ENCODE measurements at regions of chr7 and their contacts with region 1.

Region 1: DNA sequence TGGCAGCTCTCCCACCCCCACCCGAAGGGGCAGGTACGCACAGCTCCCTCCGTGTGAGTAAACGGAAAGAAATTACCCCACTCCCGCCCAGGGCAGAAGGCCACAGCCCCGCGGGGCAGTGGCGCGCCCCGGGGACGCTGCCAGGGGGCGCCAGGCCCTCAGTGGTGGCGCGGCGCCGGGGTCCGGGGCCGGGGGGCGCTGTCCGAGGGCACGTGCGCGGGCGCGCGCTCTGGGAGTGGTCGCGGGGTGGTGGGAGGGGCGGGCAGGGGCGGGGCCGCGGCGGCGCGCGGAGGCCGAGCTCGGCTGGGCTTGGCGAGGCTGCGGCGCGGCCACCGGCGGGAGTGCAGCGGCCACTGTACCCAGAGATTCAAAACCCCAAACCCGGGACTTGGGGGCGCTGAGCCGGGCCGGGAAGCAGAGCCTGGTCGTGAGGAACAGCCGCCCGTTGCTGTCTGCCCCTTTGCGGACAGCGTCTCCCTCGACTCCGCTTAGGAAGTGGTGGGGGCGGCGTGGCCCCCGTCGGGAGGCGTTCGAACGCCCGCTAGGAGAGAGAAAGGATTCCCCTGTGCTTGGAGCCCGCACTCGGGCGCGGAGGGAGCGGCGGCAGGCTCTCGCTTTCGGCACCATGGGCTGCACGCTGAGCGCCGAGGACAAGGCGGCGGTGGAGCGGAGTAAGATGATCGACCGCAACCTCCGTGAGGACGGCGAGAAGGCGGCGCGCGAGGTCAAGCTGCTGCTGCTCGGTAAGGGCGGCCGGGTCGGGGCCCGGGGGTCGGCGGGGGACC is at the start of gene GNAI1:
- DNase-seq: peak; percentile 48 to 83 (median 64)
- H3K4me3 ChIP-seq: peak within 1 kb of the TSS; percentile 69 to 99 (median 93)
- H3K27ac ChIP-seq: peak within 1 kb of the TSS; percentile 90 to 100 (median 99)
- H3K27me3 ChIP-seq: no peaks in the 10 kb centered on the region
- CTCF ChIP-seq: peak in 51 of 56 donors; percentile 11 to 74 (median 47)
- total RNA-seq, gene GNAI1: 23.9 to 223 (median 101) TPM

Region 2: GRCh38 chr7:80095545-80095944 is 39.2 kb before region 1 on chr7:
- intact Hi-C with region 1: loop called in 1 of 2 experiments (anchors 2 kb)
- DNase-seq: no peak
- H3K4me3 ChIP-seq: no peak overlapping the region
- H3K27ac ChIP-seq: peak overlapping the region in 4 of 59 donors; percentile 4 to 24 (median 22)
- H3K27me3 ChIP-seq: no peaks in the 10 kb centered on the region
- CTCF ChIP-seq: peak; percentile 49 to 89 (median 69)

Region 3: DNA sequence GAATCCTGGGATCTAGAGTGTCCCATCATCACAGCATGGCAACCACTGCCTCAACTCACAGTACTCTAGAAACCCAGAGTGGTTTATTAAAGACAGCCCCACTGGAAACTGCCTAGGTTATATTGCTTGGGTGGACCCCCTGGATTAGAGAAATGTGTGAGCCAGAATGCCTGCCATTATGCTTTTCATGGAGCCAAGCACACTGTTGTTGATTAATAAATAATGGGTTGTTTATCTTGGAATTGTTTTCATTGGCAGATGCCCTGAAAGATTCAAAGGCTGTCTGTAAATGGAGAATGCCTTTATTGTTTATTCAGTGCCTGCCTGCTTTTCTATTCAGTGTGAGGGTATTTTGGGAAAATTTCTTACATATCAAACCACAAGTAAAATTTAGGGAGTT is 52.0 kb after region 1 on chr7:
- intact Hi-C with region 1: loop called (anchors 2 to 5 kb)
- DNase-seq: peak in 1 of 10 donors; percentile 36
- H3K4me3 ChIP-seq: peak overlapping the region in 18 of 59 donors; percentile 2 to 40 (median 23)
- H3K27ac ChIP-seq: peak overlapping the region; percentile 65 to 99 (median 95)
- H3K27me3 ChIP-seq: no peaks in the 10 kb centered on the region
- CTCF ChIP-seq: no peak

Region 4: GRCh38 chr7:80288175-80289122 is 153.7 kb after region 1 on chr7:
- intact Hi-C with region 1: loop called in 1 of 2 experiments (anchors 5 kb)
- DNase-seq: peak in 6 of 10 donors; percentile 21 to 62 (median 44)
- H3K4me3 ChIP-seq: no peak overlapping the region
- H3K27ac ChIP-seq: peak overlapping the region in 5 of 59 donors; percentile 4 to 18 (median 14)
- H3K27me3 ChIP-seq: no peaks in the 10 kb centered on the region
- CTCF ChIP-seq: peak in 53 of 56 donors; percentile 13 to 77 (median 49)

Region 5: GRCh38 chr7:80346704-80347103 is 212.0 kb after region 1 on chr7:
- intact Hi-C with region 1: no loop called
- DNase-seq: no peak
- H3K4me3 ChIP-seq: no peak overlapping the region
- H3K27ac ChIP-seq: no peak overlapping the region
- H3K27me3 ChIP-seq: no peaks in the 10 kb centered on the region
- CTCF ChIP-seq: no peak

Region 6: DNA sequence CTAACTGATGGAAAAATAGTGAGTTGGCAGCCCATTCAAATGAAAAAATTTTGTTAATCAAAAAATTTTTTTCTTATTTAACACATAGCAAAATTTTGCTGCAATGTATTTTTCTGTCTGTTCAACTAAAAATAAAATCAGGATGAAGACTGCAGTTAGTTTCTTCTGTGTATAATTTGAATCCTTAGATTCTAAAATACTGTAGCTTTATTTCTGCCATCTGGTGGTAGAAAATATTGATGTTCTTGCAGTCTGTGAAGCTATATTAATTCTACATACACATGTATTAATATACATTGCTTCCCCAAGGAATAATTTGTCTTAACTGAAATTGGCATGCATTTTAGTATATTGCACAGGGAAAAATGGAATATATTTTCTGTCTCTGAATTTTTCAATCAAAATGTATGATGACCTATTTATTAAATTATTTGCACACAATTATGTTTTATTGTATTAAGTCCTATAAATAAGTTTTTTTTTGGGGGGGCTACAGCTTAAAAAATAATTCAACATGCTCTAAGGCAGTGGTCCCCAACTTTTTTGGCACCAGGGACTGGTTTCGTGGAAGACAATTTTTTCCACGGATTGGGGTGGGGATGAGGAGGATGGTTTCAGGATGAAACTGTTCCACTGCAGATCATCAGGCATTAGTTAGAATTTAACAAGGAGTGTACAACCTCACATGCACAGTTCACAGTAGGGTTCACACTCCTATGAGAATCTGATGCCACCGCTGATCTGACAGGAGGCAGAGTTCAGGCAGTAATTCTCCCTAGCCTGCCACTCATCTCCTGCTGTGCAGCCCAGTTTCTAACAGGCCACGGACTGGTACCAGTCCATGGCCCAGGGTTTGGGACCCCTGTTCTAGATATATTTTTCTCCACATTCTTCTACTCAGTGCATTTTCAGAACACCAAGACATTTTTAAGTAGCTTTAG is 257.8 kb after region 1 on chr7:
- intact Hi-C with region 1: loop called (anchors 2 to 5 kb)
- DNase-seq: no peak
- H3K4me3 ChIP-seq: no peak overlapping the region
- H3K27ac ChIP-seq: peak overlapping the region in 44 of 59 donors; percentile 1 to 86 (median 56)
- H3K27me3 ChIP-seq: no peaks in the 10 kb centered on the region
- CTCF ChIP-seq: peak; percentile 53 to 86 (median 76)